Heart left ventricle (tissue), 16 donors: ENCODE measurements at regions of chr6 and their contacts with region 1.

Region 1: DNA sequence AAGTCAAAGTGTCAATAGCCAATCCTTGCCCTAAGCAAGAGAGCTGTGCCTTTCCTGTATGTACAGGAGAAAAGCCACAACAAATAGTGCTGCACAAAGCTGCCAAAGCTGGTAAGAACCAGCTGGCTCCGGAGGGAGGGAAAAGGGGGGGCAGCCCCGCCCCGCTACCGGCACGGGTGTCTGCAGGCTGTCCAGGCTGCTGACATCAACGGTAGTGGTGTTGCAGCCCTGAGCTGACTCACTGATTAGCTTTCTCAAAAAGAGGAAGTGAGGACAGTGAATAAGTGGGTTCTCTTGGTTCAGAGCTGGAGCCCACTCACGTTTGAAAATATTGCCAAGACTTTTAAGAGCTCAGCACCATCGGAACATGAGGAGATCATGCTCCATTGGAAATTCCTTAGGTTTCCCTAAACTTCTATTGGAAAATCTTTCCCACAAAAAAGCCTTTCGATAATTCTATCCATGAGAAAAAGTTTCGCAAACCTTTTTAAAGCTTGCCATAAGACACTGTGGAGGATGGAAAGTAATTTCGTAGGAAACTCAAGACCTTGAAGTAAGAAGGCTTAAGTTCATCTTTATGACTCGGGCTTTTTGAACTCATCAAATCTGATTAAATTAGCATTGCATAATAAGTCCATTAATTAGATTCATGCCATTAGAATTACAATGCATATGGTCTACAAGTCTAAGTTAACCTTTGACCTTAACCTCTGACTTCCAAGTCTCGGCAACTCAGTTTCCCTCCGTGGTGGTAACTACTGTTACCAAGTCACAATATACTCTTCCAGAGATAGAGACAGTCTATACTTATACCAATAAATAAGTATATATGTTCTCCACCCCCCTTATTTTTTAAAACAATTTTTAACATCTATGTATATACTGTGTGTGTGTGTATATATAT is 67.0 kb downstream of the TNFRSF21 start:
- DNase-seq: peak; percentile 85 to 92 (median 90)
- ATAC-seq: peak; percentile 96 to 99 (median 98)
- H3K4me3 ChIP-seq: peak overlapping the region in 1 of 12 donors; percentile 6
- H3K27ac ChIP-seq: peak overlapping the region in 8 of 12 donors; percentile 1 to 72 (median 34)
- H3K4me1 ChIP-seq: peaks cover 0 to 43% (median 29%) of the 10 kb centered on the region in 12 donors
- H3K27me3 ChIP-seq: no peaks in the 10 kb centered on the region
- CTCF ChIP-seq: no peak
- POLR2A ChIP-seq: no peak

Region 2: GRCh38 chr6:46312654-46313053 is 930.1 kb before region 1 on chr6:
- intact Hi-C with region 1: no loop called
- DNase-seq: peak in 1 of 5 donors; percentile 31
- ATAC-seq: peak in 3 of 4 donors; percentile 52 to 66 (median 54)
- H3K4me3 ChIP-seq: no peak overlapping the region
- H3K27ac ChIP-seq: no peak overlapping the region
- H3K4me1 ChIP-seq: peaks cover 0 to 25% (median 8%) of the 10 kb centered on the region in 12 donors
- H3K27me3 ChIP-seq: no peaks in the 10 kb centered on the region
- CTCF ChIP-seq: no peak
- POLR2A ChIP-seq: no peak

Region 3: DNA sequence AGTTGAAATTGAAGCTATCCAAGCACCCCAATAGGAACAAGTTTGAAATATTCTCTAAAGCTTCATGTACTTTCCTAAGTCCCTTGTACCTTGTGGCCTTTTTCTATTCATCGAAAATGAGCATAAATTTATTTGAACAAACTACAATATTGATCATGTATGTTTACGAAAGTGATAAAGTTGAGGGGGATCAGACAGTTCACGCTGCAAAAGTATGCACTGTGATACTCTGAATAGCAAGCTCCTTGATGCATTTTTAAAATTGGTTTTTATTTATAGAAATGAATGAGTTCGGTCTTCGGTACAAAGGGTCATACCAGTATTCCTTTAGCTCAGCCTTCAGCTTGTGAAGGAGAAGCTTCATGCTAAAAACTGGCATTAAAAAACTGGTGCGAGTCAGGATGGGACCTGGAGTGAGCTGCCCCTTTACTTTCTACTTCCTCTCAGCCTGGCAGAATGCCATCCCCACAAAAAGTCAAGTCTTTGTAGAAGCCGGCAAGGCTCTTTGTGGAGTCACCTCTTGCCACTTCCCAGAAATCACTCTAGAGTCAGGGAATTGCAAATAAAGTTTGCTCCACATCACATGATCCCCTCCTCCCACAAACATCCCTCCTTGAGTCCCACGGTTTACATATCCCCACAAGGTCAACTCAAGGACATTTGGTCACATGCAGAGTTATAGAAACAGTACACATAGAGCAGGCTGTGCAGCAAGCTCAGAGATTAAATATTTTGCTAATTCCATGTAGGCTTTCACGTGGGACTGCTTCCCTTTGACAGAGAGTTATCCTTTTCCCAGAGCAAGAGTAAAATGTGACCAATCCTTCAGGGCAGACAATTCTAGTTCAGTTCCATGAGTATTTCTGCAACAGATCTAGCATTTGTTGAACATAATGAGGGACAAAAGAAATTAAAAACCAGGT is 166.1 kb before region 1 on chr6:
- intact Hi-C with region 1: loop called in 1 of 10 experiments (anchors 5 kb)
- DNase-seq: peak in 1 of 5 donors; percentile 39
- ATAC-seq: peak; percentile 27 to 66 (median 39)
- H3K4me3 ChIP-seq: no peak overlapping the region
- H3K27ac ChIP-seq: peak overlapping the region in 10 of 12 donors; percentile 1 to 76 (median 30)
- H3K4me1 ChIP-seq: peaks cover 0 to 24% (median 1%) of the 10 kb centered on the region in 12 donors
- H3K27me3 ChIP-seq: peaks cover 0 to 9% (median 0%) of the 10 kb centered on the region in 9 donors
- CTCF ChIP-seq: no peak
- POLR2A ChIP-seq: no peak

Region 4: GRCh38 chr6:47097092-47097945 is 145.4 kb before region 1 on chr6:
- intact Hi-C with region 1: loop called in 7 of 10 experiments (anchors 5 to 10 kb)
- DNase-seq: peak in 4 of 5 donors; percentile 59 to 75 (median 68)
- ATAC-seq: peak; percentile 70 to 92 (median 90)
- H3K4me3 ChIP-seq: no peak overlapping the region
- H3K27ac ChIP-seq: peak overlapping the region in 2 of 12 donors; percentile 10 to 25
- H3K4me1 ChIP-seq: peaks cover 0 to 27% (median 8%) of the 10 kb centered on the region in 12 donors
- H3K27me3 ChIP-seq: no peaks in the 10 kb centered on the region
- CTCF ChIP-seq: peak; percentile 46 to 76 (median 64)
- POLR2A ChIP-seq: no peak

Region 5: DNA sequence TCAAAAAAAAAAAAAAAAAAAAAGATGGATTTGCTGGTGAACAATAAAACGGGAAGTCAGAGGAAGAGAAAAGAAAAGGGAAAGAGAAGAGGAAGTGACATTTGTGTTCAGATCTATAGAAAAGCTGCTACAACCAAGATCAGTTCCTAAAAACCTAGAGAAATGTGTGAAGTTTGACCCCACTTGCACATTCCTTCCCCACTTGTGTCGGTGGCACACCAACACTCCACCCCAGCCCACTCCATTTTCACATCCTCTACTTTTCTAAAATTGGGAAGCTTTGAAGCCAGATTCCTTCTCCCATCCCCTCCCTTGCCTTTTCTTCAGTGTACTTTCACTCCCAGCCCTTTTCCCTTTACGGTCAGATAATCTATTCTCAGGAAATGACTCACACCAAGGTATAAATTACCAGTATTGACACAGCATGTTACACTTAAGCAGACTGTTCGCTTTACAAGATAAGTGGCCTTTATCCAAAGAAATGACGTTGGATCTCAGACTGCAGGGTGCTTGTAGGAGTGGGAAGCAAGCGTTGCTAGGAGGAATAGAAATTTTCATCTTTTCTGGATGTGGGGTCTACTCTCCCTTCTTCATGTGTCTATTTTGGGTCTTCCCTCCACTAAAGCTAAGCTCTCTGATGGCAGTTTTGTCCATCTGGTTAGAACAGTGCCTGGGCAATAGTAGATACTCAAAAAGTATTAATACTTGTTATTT is 108.1 kb before region 1 on chr6:
- intact Hi-C with region 1: loop called in 2 of 10 experiments (anchors 10 kb)
- DNase-seq: no peak
- ATAC-seq: peak in 3 of 4 donors; percentile 44 to 83 (median 74)
- H3K4me3 ChIP-seq: no peak overlapping the region
- H3K27ac ChIP-seq: peak overlapping the region in 1 of 12 donors; percentile 54
- H3K4me1 ChIP-seq: peaks cover 0 to 27% (median 12%) of the 10 kb centered on the region in 12 donors
- H3K27me3 ChIP-seq: no peaks in the 10 kb centered on the region
- CTCF ChIP-seq: no peak
- POLR2A ChIP-seq: no peak

Region 6: DNA sequence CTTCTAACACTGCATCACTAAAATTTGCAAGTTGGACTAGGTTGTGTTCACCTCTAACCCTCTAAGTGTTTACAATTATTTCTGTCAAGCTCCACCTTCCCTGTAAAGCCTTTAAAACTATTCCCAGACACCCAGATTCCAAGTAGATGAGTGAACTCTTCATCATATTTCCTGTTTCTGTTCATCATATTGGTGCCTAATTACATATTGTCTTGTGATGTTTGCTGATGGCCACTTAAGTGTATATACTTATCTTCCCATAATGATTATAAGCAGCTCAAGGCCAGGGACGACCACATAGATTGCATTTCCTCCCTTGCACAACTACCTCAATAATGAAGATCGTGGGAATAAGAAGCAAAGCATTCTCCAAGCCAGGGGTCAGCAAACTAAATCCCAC is 50.2 kb after region 1 on chr6:
- intact Hi-C with region 1: no loop called
- DNase-seq: no peak
- ATAC-seq: no peak
- H3K4me3 ChIP-seq: no peak overlapping the region
- H3K27ac ChIP-seq: no peak overlapping the region
- H3K4me1 ChIP-seq: no peaks in the 10 kb centered on the region
- H3K27me3 ChIP-seq: no peaks in the 10 kb centered on the region
- CTCF ChIP-seq: no peak
- POLR2A ChIP-seq: no peak